ENCODE measurements at regions of chr22 and their contacts with region 1.

Region 1: DNA sequence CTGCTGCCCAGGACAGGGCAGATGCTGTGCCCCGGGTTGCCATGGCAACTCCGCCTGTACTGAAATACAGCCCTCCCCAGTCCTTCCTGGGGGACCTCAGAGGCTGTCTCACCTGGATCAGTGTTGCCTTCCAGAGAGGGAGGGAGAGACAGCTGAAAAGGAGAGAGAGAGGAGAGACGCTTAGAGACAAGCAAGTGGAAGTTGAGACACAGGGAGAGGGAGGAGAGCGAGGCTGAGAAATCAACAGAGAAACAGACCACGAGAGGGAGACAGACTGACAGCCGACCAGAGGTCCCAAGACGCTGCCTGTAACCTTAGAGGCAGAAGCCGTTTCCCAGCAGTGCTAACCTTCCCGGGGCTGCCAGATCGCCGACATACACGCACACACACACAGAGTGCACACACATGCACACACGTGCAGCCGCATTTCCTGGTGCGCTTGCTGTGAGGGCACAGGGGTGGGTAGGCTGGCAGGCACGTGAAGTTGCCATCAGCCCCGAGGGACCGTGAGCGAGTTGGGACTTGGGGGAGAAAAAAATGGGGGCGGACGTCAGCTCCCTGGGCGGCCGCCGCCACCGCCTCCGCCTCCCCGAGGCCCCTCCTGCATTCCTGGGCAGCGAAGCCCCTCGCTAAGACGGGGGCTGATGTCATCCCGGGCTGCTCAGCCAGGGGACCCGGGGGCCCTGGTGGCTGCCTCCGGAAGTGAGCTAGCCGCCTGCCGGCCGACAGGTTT is 88.6 kb upstream of the CRYBB3 start:
- DNase-seq: peak; percentile 19 to 81 (median 55)
- ATAC-seq: peak; percentile 79
- H3K4me3 ChIP-seq: peak overlapping the region; percentile 66 to 70
- H3K4me3 Mint-ChIP-seq: peak overlapping the region; percentile 88
- H3K27ac ChIP-seq: peak overlapping the region; percentile 10 to 46
- H3K27ac Mint-ChIP-seq: peak overlapping the region; percentile 92
- H3K4me1 ChIP-seq: peaks cover 15% of the 10 kb centered on the region
- H3K4me1 Mint-ChIP-seq: peaks cover 40% of the 10 kb centered on the region
- H3K27me3 ChIP-seq: no peaks in the 10 kb centered on the region
- H3K27me3 Mint-ChIP-seq: no peaks in the 10 kb centered on the region
- CTCF ChIP-seq: peak; percentile 74

Region 2: GRCh38 chr22:24951942-24952836 is 158.8 kb before region 1 on chr22 and contains the start of gene KIAA1671:
- CTCF ChIA-PET with region 1: no interaction called
- POLR2A ChIA-PET with region 1: no interaction called
- intact Hi-C with region 1: loop called in 1 of 2 experiments (anchors 5 kb)
- DNase-seq: peak; percentile 65 to 91 (median 84)
- ATAC-seq: peak; percentile 93
- H3K4me3 ChIP-seq: peak within 1 kb of the TSS; percentile 70 to 71
- H3K4me3 Mint-ChIP-seq: peak within 1 kb of the TSS; percentile 83
- H3K27ac ChIP-seq: no peak within 1 kb of the TSS
- H3K27ac Mint-ChIP-seq: no peak within 1 kb of the TSS
- H3K4me1 ChIP-seq: peaks cover 13% of the 10 kb centered on the region
- H3K4me1 Mint-ChIP-seq: peaks cover 21% of the 10 kb centered on the region
- H3K27me3 ChIP-seq: peaks cover 9% of the 10 kb centered on the region in 2 experiments
- H3K27me3 Mint-ChIP-seq: peaks cover 54% of the 10 kb centered on the region
- CTCF ChIP-seq: peak; percentile 86
- total RNA-seq, gene KIAA1671: 2.3 to 2.4 TPM

Region 3: DNA sequence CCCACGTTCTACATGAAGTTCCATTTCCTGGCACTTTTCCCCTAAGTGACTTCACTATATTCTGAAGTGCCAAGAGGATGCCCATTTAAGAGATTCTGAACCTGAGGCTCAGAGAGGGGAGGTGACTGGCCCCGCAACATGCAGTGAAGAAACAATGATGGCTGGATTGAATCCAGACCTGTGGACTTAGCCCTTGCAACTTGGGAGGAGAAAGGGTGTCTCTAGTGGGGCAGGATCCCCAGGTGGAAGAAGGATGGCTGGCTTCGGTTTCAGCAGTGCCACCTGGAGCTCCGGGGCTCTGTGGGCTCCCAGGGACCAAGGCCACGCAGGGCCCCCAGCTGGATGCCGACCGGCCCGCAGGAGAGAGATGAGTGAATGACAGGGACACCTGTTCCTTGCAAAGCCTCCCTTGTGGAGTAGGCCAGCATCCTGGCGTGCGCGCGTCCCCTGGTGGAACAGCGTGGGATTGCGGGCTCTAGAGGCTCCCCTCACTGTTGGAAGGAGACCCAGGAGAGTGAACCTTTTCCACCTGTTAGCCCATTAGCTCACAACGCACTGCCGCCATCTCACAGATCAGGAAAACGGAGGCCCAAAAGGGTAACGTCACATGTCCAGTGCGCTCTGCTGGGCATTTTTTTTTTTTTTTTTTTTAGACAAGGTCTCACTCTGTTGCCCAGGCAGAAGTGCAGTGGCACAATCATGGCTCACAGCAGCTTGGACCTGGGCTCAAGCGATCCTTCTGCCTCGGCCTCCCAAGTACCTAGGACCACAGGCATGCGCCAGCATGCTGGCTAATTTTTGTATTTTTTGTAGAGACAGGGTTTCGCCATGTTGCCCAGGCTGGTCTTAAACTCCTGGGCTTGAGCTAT is 53.8 kb before region 1 on chr22:
- CTCF ChIA-PET with region 1: interaction called, 34 read pairs
- POLR2A ChIA-PET with region 1: no interaction called
- intact Hi-C with region 1: loop called (anchors 1 kb)
- DNase-seq: peak; percentile 50 to 85 (median 77)
- ATAC-seq: peak; percentile 57
- H3K4me3 ChIP-seq: no peak overlapping the region
- H3K4me3 Mint-ChIP-seq: no peak overlapping the region
- H3K27ac ChIP-seq: no peak overlapping the region
- H3K27ac Mint-ChIP-seq: no peak overlapping the region
- H3K4me1 ChIP-seq: peaks cover 29% of the 10 kb centered on the region
- H3K4me1 Mint-ChIP-seq: peaks cover 36% of the 10 kb centered on the region
- H3K27me3 ChIP-seq: peaks cover 0 to 2% of the 10 kb centered on the region in 2 experiments
- H3K27me3 Mint-ChIP-seq: no peaks in the 10 kb centered on the region
- CTCF ChIP-seq: peak; percentile 76

Region 4: DNA sequence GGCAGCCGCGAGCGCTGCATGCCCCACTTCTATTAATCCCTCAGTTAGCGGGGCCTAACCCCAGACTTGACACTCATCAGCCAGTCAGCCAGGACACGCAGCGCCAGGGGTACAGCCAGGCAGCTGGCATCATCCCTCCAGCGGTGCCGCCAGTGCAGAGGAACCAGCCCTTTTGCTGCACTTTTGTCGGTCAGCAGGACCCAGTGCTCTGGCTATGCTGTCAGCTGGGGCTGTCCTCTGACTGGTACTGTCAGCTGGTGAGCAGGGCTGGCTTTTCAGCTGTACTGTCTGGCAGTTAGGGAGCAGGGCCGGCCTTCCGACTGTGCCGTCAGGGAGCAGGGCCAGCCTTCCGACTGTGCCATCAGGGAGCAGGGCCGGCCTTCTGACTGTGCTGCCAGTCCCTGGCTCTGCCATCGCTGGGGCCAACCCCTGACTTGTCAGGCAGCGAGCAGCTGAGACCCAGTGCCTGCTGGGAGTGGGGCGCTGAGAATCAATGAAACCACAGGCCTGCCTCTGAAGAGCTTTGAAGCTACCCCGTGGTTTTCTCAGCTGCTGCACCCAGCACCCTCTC is 43.1 kb before region 1 on chr22:
- CTCF ChIA-PET with region 1: interaction called, 34 read pairs
- POLR2A ChIA-PET with region 1: interaction called, 22 read pairs
- intact Hi-C with region 1: no loop called
- DNase-seq: peak; percentile 73 to 97 (median 87)
- ATAC-seq: peak; percentile 85
- H3K4me3 ChIP-seq: peak overlapping the region; percentile 1 to 40
- H3K4me3 Mint-ChIP-seq: peak overlapping the region; percentile 77
- H3K27ac ChIP-seq: peak overlapping the region; percentile 69 to 72
- H3K27ac Mint-ChIP-seq: peak overlapping the region; percentile 99
- H3K4me1 ChIP-seq: peaks cover 67% of the 10 kb centered on the region
- H3K4me1 Mint-ChIP-seq: peaks cover 94% of the 10 kb centered on the region
- H3K27me3 ChIP-seq: no peaks in the 10 kb centered on the region
- H3K27me3 Mint-ChIP-seq: no peaks in the 10 kb centered on the region
- CTCF ChIP-seq: no peak

Region 5: GRCh38 chr22:25081409-25081824 is 29.6 kb before region 1 on chr22:
- CTCF ChIA-PET with region 1: interaction called, 31 read pairs
- POLR2A ChIA-PET with region 1: interaction called, 5 read pairs
- intact Hi-C with region 1: no loop called
- DNase-seq: peak in 8 of 9 experiments; percentile 17 to 75 (median 56)
- ATAC-seq: peak; percentile 75
- H3K4me3 ChIP-seq: no peak overlapping the region
- H3K4me3 Mint-ChIP-seq: no peak overlapping the region
- H3K27ac ChIP-seq: no peak overlapping the region
- H3K27ac Mint-ChIP-seq: no peak overlapping the region
- H3K4me1 ChIP-seq: peaks cover 32% of the 10 kb centered on the region
- H3K4me1 Mint-ChIP-seq: peaks cover 58% of the 10 kb centered on the region
- H3K27me3 ChIP-seq: no peaks in the 10 kb centered on the region
- H3K27me3 Mint-ChIP-seq: no peaks in the 10 kb centered on the region
- CTCF ChIP-seq: peak; percentile 67

Region 6: DNA sequence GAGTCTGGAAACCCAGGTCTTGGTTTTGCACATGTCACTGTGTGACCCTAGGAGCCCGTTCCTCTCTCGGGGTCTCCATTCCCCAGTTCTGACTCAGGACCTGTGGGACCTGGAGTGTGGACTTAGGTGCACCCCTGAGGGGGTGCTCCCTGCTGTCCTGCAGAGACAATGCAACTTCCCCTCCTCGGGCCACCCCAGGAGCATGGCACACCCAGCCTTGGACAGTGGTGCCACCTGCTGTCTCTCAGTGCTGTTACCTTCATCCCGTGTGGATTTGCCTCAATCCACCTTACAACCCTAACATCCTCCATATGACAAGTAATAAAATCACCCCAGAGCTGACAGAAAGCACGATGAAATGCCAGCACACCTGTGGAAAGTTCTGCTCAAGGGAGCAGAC is 61.1 kb after region 1 on chr22:
- CTCF ChIA-PET with region 1: interaction called, 7 read pairs
- POLR2A ChIA-PET with region 1: no interaction called
- intact Hi-C with region 1: loop called in 1 of 2 experiments (anchors 2 kb)
- DNase-seq: peak in 6 of 9 experiments; percentile 16 to 62 (median 36)
- ATAC-seq: peak; percentile 51
- H3K4me3 ChIP-seq: no peak overlapping the region
- H3K4me3 Mint-ChIP-seq: no peak overlapping the region
- H3K27ac ChIP-seq: no peak overlapping the region
- H3K27ac Mint-ChIP-seq: no peak overlapping the region
- H3K4me1 ChIP-seq: no peaks in the 10 kb centered on the region
- H3K4me1 Mint-ChIP-seq: no peaks in the 10 kb centered on the region
- H3K27me3 ChIP-seq: no peaks in the 10 kb centered on the region
- H3K27me3 Mint-ChIP-seq: no peaks in the 10 kb centered on the region
- CTCF ChIP-seq: peak; percentile 14

Region 7: GRCh38 chr22:25346859-25347751 is 236.1 kb after region 1 on chr22:
- CTCF ChIA-PET with region 1: no interaction called
- POLR2A ChIA-PET with region 1: no interaction called
- intact Hi-C with region 1: no loop called
- DNase-seq: no peak
- ATAC-seq: no peak
- H3K4me3 ChIP-seq: no peak overlapping the region
- H3K4me3 Mint-ChIP-seq: no peak overlapping the region
- H3K27ac ChIP-seq: no peak overlapping the region
- H3K27ac Mint-ChIP-seq: no peak overlapping the region
- H3K4me1 ChIP-seq: no peaks in the 10 kb centered on the region
- H3K4me1 Mint-ChIP-seq: no peaks in the 10 kb centered on the region
- H3K27me3 ChIP-seq: no peaks in the 10 kb centered on the region
- H3K27me3 Mint-ChIP-seq: no peaks in the 10 kb centered on the region
- CTCF ChIP-seq: no peak

Measured in CD8-positive, alpha-beta T cell (primary cell).